ENCODE measurements at regions of chr1 and their contacts with region 1.

Region 1: DNA sequence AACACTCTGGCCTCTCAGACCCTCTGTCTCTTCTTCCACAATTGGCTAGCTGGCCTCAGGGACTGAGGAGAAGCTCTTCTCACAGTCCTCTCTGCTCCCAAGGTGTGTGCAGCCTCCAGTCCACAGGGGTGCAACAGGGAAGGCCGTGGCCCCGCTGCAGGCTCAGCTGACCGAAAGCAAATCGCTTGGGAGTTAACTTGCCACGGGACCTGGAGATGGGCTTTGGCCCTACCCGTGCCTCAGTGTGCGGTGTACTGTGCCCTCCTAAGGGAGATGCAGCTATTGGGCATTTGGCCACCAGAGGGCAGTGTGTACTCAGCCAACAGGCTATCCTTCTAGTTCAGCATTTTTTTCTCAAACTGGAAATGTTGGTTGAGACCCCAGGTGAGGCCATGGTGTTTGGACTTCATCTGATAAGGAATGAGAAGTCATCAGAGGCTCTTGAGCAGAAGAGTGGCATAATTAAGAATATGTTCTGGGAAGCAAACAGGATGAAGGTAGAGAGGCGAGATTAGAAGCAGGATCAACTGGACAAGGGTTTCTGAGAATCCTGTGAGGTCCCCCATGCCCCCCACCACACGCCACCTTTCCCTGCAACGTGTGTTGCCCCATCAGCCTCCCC is 42.5 kb upstream of the TMEM125 start:
- DNase-seq: peak; percentile 80 to 81
- H3K4me3 ChIP-seq: no peak overlapping the region
- H3K27ac ChIP-seq: no peak overlapping the region
- H3K4me1 ChIP-seq: no peaks in the 10 kb centered on the region
- H3K27me3 ChIP-seq: no peaks in the 10 kb centered on the region
- CTCF ChIP-seq: peak; percentile 84 to 90 (median 88)
- POLR2A ChIP-seq: no peak

Region 2: DNA sequence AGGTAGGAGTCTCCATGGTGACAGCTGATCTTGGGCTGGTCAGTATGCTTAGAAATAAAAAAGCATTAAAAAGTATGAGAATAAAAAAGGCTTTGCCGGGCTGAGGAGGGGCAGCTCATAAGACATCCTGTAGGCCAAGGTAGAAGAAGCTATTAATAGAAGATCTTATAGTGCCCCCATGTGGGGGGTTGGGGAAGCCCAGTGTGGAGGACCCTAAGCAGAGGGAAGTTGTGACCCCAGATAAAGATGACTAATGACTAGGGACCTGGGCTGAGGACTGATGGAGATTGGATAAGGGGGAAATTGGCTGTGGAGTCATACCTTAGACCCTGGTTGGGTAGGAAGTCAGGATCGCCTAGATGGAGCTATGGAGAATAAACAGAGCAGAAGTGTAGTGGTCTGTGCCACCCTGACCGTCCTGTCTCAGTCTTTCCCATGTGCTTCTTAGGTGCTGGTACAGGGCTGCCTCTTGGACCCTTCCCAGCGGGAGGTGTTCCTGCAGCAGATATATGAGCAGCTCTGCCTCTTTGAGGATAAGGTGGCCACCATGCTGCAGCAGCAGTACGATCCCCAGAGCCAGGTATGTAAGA is 187.5 kb after region 1 on chr1:
- intact Hi-C with region 1: loop called (anchors 10 kb)
- DNase-seq: peak in 1 of 2 donors; percentile 53
- H3K4me3 ChIP-seq: no peak overlapping the region
- H3K27ac ChIP-seq: no peak overlapping the region
- H3K4me1 ChIP-seq: no peaks in the 10 kb centered on the region
- H3K27me3 ChIP-seq: no peaks in the 10 kb centered on the region
- CTCF ChIP-seq: peak; percentile 50 to 63 (median 56)
- POLR2A ChIP-seq: no peak